Uterus (tissue), 4 donors: ENCODE measurements at regions of chr5 and their contacts with region 1.

Region 1: DNA sequence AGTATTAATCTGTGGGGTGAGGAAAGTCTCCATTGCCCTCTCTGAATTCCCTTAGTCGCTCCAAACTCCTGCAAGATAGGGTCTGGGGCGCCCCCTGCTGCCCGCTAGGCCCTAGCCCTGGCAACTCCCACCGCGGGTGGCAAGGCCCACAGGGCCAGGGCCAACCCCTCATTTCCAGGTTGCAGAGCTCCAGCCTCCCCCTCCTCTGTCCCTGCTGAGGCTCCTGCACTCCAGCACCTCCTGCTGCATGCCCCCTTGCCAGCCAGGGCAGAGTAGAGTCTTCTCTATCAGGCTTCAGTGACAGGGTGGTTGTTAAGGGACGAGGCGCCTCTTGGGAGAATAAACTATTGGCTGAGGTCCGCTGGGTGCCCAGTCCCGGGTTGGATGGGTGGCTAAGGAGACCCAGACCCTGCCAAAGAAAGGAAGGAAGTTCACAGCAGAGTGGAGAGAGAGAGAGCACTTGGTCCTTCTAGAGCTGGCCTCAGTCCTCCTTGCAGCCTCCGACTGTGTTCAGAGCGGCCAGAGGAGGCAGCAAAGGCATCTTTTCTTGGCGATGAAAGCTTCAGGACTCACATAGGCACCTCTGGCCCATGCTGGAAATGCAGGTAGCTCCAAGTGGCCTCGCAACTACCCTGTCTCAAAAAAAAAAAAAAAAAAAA is 45.6 kb downstream of the SAR1B start:
- DNase-seq: peak; percentile 79 to 82
- H3K4me3 ChIP-seq: no peak overlapping the region
- H3K27ac ChIP-seq: peak overlapping the region in 1 of 2 donors; percentile 17
- H3K4me1 ChIP-seq: no peaks in the 10 kb centered on the region
- H3K27me3 ChIP-seq: no peaks in the 10 kb centered on the region
- CTCF ChIP-seq: peak; percentile 77 to 81 (median 80)
- POLR2A ChIP-seq: peak in 1 of 2 donors; percentile 25

Region 2: GRCh38 chr5:134304311-134304710 is 282.7 kb before region 1 on chr5:
- intact Hi-C with region 1: loop called (anchors 5 kb)
- DNase-seq: no peak
- H3K4me3 ChIP-seq: no peak overlapping the region
- H3K27ac ChIP-seq: no peak overlapping the region
- H3K4me1 ChIP-seq: no peaks in the 10 kb centered on the region
- H3K27me3 ChIP-seq: no peaks in the 10 kb centered on the region
- CTCF ChIP-seq: no peak
- POLR2A ChIP-seq: no peak